ENCODE measurements at regions of chr9 and their contacts with region 1.

Region 1: DNA sequence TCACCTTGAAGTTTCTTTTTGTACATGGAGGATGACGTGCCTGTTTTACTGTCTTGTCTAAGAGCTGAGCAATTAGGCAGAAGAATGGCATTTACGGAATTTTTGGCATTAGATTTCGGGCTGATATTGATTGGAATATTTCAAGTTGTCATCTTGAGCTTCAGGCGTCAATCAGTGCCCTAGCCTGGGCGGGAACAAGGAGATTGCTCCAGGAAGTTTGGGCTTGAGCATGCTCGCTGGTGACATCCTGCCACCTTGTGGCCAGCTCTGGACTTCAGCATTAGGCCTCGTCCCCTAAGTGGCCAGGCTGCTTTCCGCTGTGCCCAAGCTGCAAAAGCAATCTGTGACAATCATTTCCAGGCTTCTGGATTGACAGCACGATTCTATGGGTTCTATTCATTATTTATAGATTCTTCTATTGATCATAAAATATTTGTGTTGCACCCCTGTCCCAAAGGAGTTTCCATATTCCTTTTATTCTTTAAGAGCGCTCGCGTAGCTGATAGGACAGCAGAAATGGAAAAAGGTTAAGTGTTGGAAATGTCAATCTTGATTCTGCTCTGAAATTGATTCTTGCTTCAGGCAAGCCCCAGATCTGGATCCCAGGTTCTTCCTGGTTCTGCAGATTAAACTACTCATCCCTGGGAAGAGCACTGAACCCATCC is 79.3 kb downstream of the SLC28A3 start:
- DNase-seq: peak; percentile 10
- H3K4me3 ChIP-seq: no peak overlapping the region
- CTCF ChIP-seq: peak; percentile 92

Region 2: GRCh38 chr9:83920927-83921707 is 340.1 kb before region 1 on chr9 and contains the start of gene KIF27:
- CTCF ChIA-PET with region 1: interaction called, 33 read pairs
- POLR2A ChIA-PET with region 1: no interaction called
- DNase-seq: peak; percentile 75
- H3K4me3 ChIP-seq: peak within 1 kb of the TSS; percentile 72
- CTCF ChIP-seq: peak; percentile 59

Region 3: GRCh38 chr9:83956434-83957247 is 304.6 kb before region 1 on chr9:
- CTCF ChIA-PET with region 1: interaction called, 13 read pairs
- POLR2A ChIA-PET with region 1: no interaction called
- DNase-seq: no peak
- H3K4me3 ChIP-seq: peak overlapping the region; percentile 60
- CTCF ChIP-seq: no peak

Region 4: GRCh38 chr9:83972286-83972685 is 288.9 kb before region 1 on chr9:
- CTCF ChIA-PET with region 1: interaction called, 36 read pairs
- POLR2A ChIA-PET with region 1: no interaction called
- DNase-seq: no peak
- H3K4me3 ChIP-seq: no peak overlapping the region
- CTCF ChIP-seq: no peak

Region 5: DNA sequence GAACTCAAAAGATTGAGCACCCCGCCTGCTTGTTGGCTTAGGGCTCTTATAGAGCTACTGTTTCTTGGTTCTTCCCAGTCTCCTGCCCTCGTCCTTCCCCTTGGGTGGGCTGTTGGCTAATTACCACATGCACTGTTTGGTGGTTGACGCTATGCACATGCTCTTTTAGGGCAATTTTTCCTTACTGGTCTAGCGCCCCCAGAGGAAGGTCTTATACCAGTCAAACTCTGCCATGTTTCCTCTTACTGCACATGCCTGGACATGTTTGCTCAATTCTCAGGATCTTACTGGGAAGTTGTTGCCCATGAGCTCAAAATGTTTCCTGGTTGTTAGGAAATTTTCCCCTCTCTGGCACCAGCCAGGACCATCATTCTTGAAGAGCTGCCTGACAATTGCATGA is 22.6 kb before region 1 on chr9:
- CTCF ChIA-PET with region 1: interaction called, 11 read pairs
- POLR2A ChIA-PET with region 1: no interaction called
- DNase-seq: no peak
- H3K4me3 ChIP-seq: no peak overlapping the region
- CTCF ChIP-seq: peak; percentile 7

Region 6: DNA sequence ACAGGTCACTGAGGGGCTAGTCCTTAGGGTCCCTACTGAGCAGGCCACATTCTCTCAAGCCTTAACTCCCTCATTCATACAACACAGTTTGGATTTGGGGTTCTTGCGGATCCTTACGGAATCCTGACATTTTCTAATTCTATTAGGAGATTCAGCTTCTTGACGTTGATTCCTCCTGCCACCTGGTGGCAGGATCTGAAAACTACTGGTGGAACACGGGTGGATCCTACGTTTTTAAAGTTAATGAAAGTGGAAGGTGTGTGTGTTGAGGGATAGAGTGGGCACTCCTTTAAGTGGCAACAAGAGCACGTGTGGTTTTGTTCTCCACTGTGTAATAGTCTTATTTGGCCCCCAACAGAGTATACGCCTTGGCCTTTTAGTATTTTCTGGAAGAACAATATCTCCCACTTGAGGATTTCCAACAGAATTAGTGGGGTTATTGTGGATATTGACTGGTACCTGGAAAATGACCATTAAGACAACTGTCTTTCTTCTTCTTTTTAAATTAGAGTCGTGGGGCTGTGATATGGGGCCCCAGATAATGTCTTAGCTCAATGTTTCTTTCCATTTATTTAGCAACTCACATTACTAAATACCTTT is 54.2 kb after region 1 on chr9:
- CTCF ChIA-PET with region 1: interaction called, 20 read pairs
- POLR2A ChIA-PET with region 1: no interaction called
- DNase-seq: no peak
- H3K4me3 ChIP-seq: no peak overlapping the region
- CTCF ChIP-seq: peak; percentile 55

Measured in AG04449 (cell line).